Sigmoid colon (tissue), 7 donors: ENCODE measurements at regions of chr1 and their contacts with region 1.

Region 1: DNA sequence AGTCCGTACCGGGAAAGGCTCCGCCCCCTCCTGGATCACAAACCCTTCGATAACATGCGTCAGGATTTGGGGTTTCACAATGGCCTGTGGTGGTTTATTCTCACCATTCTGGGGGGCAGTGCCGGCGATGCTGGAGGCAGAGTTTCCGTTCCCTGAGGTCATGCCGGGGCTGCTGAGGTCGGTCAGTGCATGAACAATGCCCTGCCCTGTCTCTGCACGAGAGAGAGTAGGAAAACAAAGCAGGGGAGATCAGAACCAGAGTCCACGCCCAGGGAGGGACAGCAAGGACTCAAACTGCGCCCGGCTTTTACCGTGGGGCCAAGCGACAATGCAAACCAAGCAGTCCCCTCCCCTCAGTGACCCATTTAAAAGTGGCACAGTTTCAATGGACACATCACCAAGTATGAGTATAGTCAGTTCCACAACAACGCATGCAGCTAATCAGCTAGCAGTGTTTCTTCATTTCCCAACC is 13.2 kb upstream of the A3GALT2 start:
- DNase-seq: peak; percentile 87
- H3K4me3 ChIP-seq: no peak overlapping the region
- H3K27ac ChIP-seq: peak overlapping the region; percentile 56 to 100 (median 98)
- H3K4me1 ChIP-seq: peaks cover 0 to 91% (median 79%) of the 10 kb centered on the region in 4 donors
- H3K27me3 ChIP-seq: no peaks in the 10 kb centered on the region
- CTCF ChIP-seq: no peak
- EP300 ChIP-seq: peak in 2 of 4 donors; percentile 13 to 30
- POLR2A ChIP-seq: no peak

Region 2: DNA sequence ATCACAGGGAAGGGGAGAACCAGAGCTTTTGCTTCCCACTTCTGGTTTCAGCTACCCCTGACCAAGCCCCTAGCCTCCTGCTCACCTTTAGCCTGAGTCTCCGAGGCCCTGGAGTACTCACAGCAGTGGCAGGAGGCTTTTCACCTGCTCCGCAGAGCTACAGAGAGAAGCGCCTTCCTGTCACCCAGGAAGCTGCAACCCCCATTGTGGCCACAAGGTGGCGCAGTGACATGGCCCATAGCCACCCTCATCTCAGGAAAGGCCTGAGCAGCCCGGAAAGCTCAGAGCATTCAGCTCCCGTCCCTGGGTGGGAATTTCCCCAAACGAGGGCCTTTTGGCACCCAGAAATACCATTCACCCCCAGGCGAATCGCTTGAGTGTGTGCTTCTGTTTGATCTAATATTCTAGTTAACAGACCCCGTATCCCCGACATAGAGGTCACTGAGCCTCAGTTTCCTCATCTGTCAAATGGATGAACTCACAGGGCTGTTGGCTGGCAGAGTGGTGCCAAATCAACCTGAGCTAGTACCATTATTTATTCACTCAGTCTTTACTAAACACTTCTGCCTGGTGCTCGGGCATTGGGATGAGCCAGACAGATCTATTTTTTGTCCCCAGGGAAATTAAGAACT is 38.6 kb before region 1 on chr1:
- intact Hi-C with region 1: loop called (anchors 5 kb)
- DNase-seq: peak; percentile 92
- H3K4me3 ChIP-seq: no peak overlapping the region
- H3K27ac ChIP-seq: peak overlapping the region; percentile 41 to 53 (median 48)
- H3K4me1 ChIP-seq: peaks cover 0 to 31% (median 20%) of the 10 kb centered on the region in 4 donors
- H3K27me3 ChIP-seq: no peaks in the 10 kb centered on the region
- CTCF ChIP-seq: peak; percentile 95 to 99 (median 98)
- EP300 ChIP-seq: no peak
- POLR2A ChIP-seq: no peak

Region 3: GRCh38 chr1:33455539-33456501 is 121.7 kb after region 1 on chr1:
- intact Hi-C with region 1: no loop called
- DNase-seq: no peak
- H3K4me3 ChIP-seq: no peak overlapping the region
- H3K27ac ChIP-seq: peak overlapping the region in 3 of 4 donors; percentile 71 to 91 (median 81)
- H3K4me1 ChIP-seq: peaks cover 2 to 58% (median 48%) of the 10 kb centered on the region in 4 donors
- H3K27me3 ChIP-seq: no peaks in the 10 kb centered on the region
- CTCF ChIP-seq: peak; percentile 36 to 55 (median 54)
- EP300 ChIP-seq: no peak
- POLR2A ChIP-seq: no peak